AG04449 (cell line): ENCODE measurements at regions of chr10 and their contacts with region 1.

Region 1: DNA sequence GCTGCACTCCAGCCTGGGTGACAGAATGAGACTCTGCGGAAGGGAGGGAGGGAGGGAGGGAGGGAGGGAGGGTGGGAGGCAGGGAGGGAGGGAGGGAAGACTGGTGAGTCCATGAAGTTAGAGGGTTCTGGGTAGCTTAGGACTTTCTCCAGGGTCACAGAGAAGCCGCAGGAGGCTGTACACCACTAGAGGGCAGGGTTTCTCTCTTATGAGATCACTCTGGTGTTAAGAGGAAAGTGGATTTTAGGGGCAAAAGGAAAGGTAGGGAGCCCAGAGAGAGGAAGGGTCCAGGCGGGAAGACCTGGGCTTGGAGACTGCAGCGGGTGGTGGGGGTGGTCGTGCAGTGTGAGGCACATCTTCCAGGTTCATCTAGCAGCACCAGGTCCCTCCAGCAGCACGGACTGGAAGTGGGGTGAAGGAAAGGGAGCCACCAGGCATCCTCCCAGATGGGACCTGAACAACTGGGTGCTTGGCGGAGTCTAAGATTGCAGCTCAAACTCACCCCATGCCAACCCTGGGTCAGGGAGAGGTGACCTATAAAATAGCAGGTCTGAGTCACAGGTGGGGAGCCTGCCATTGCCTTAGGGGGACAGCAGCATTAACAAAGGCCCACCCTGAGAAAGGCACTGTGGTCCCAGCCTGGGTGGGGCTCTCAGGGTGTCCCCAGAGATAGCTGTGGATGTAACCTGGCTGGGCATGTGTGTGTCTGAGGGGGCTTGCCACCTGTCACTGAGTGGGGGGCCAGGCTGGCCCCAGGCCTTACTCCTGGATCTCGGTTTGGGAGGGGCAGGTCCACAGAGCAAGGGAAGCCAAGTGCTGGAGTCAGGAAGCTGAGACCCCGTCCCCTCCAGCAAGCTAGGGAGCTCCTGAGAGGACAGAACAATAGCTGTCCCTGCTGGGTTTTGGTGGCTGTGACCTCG is 48.5 kb upstream of the SLC29A3 start:
- DNase-seq: no peak
- H3K4me3 ChIP-seq: no peak overlapping the region
- CTCF ChIP-seq: peak; percentile 73

Region 2: DNA sequence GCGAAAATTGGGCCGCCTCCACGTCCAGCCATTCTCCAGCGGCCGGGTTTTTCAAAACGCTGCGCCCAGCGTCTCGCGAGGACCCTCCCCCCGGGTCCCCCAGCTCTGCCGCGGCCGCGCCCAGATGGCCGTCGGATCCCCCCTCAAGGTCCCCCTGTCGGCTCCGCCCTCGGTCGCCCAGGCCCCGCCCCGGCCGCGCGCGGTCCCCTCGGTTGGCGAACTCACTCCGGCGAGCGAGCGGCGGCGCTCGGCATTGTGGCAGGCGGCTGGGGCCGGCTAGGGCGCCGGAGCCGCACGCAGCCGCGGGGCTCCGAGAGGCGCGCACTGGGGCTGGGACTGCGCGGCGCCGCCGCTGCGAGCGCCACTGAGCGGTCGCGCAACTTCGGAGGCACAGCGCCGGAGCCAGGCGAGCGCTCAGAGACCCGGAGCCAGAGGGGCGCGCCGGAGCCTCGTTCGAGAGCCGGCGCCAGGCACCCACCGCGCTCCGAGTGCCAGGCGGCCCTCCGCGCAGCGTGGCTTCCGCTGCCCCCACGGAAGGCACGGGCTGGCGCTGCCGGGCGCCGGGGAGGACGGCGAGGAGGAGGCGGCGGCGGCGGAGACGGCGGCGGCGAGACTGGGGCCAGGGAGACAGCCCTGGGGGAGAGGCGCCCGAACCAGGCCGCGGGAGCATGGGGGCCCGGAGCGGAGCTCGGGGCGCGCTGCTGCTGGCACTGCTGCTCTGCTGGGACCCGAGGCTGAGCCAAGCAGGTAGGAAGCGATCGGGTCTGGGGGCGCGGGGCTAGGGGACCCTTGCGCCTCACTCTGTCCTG is 58.0 kb before region 1 on chr10 and contains the start of gene UNC5B:
- CTCF ChIA-PET with region 1: interaction called, 49 read pairs
- POLR2A ChIA-PET with region 1: no interaction called
- DNase-seq: no peak
- H3K4me3 ChIP-seq: peak within 1 kb of the TSS; percentile 73
- CTCF ChIP-seq: peak; percentile 41

Region 3: GRCh38 chr10:71244431-71245419 is 25.8 kb before region 1 on chr10:
- CTCF ChIA-PET with region 1: interaction called, 98 read pairs
- POLR2A ChIA-PET with region 1: no interaction called
- DNase-seq: no peak
- H3K4me3 ChIP-seq: peak overlapping the region; percentile 36
- CTCF ChIP-seq: no peak

Region 4: GRCh38 chr10:71285180-71285545 is 14.6 kb after region 1 on chr10:
- CTCF ChIA-PET with region 1: interaction called, 152 read pairs
- POLR2A ChIA-PET with region 1: no interaction called
- DNase-seq: no peak
- H3K4me3 ChIP-seq: no peak overlapping the region
- CTCF ChIP-seq: peak; percentile 77